Psoas muscle (tissue), 8 donors: ENCODE measurements at regions of chr1 and their contacts with region 1.

Region 1: DNA sequence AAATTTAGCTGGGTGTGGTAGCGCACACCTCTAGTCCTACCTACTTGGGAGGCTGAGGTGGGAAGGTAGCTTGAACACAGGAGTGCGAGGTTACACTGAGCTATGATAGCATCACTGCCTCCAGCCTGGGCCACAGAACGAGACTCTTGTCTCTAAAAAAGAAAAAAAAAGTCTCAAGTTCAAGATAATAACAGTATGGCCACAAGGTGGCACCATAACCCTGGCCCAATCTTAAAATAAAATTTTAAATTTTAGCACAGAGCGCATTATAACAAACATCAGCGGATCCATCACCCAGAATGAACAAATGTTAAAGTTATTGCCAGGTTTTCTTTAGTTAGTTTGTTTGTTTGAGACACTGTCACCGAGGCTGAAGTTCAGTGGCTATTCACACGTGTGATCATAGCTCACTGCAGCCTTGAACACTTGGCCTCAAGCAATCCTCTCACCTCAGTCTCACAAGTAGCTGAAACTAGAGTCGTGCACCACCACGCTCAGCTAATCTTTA is 2.9 kb upstream of the HTR6 start:
- DNase-seq: no peak
- ATAC-seq: peak in 1 of 4 donors; percentile 38
- H3K4me3 ChIP-seq: no peak overlapping the region
- H3K27ac ChIP-seq: no peak overlapping the region
- H3K4me1 ChIP-seq: no peaks in the 10 kb centered on the region
- H3K27me3 ChIP-seq: peaks cover 0 to 38% (median 13%) of the 10 kb centered on the region in 3 donors
- CTCF ChIP-seq: peak; percentile 78

Region 2: GRCh38 chr1:19341201-19342072 is 320.3 kb before region 1 on chr1:
- intact Hi-C with region 1: loop called in 1 of 2 experiments (anchors 2 kb)
- DNase-seq: peak; percentile 77 to 85
- ATAC-seq: peak; percentile 52 to 72 (median 62)
- H3K4me3 ChIP-seq: no peak overlapping the region
- H3K27ac ChIP-seq: no peak overlapping the region
- H3K4me1 ChIP-seq: no peaks in the 10 kb centered on the region
- H3K27me3 ChIP-seq: no peaks in the 10 kb centered on the region
- CTCF ChIP-seq: peak; percentile 82

Region 3: DNA sequence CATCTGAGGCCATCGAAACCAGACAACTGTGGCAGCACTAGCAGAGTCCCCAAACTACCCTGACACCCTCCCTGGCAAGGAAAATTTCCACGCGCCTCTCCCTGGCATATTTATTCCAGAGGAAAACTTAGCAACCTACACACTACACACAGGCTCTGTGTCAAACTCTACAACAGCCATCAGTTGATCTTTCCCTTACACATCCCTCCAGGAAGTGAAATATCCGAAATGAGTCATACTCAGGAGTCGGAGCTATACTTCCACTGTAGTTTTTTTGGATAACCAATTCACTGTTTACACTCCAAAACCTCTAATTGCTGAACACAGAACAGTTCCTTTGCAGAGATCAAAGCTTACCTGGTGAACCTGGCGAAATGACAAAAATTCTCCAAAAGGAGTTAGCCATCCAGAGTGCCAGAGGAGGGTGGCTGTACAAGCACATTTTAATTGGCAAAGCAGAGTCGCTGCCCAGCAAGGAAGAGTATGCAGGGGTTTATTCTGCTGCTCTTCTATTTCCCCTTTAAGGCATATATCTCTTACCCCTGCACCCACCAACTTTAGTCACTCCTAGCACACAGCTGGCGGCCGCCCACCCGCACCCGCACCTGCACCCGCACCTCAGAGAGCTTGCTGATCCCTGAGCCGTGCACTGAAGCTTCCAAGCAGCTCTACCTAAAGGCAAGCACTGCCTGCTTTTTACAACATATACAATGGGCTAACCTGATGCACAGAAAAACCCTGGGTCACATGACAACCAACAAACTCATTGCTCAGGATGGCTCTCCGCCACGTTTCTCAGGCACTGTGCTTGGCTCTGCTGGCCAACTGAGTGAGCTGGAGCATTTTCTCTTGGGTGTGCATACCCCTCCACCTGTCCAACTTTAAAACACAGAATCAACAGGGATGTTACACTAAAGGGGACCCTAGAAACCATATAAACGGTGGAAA is 231.4 kb before region 1 on chr1:
- intact Hi-C with region 1: no loop called
- DNase-seq: no peak
- ATAC-seq: peak in 2 of 4 donors; percentile 31 to 42
- H3K4me3 ChIP-seq: no peak overlapping the region
- H3K27ac ChIP-seq: peak overlapping the region; percentile 41
- H3K4me1 ChIP-seq: peaks cover 96% of the 10 kb centered on the region
- H3K27me3 ChIP-seq: no peaks in the 10 kb centered on the region
- CTCF ChIP-seq: no peak

Region 4: DNA sequence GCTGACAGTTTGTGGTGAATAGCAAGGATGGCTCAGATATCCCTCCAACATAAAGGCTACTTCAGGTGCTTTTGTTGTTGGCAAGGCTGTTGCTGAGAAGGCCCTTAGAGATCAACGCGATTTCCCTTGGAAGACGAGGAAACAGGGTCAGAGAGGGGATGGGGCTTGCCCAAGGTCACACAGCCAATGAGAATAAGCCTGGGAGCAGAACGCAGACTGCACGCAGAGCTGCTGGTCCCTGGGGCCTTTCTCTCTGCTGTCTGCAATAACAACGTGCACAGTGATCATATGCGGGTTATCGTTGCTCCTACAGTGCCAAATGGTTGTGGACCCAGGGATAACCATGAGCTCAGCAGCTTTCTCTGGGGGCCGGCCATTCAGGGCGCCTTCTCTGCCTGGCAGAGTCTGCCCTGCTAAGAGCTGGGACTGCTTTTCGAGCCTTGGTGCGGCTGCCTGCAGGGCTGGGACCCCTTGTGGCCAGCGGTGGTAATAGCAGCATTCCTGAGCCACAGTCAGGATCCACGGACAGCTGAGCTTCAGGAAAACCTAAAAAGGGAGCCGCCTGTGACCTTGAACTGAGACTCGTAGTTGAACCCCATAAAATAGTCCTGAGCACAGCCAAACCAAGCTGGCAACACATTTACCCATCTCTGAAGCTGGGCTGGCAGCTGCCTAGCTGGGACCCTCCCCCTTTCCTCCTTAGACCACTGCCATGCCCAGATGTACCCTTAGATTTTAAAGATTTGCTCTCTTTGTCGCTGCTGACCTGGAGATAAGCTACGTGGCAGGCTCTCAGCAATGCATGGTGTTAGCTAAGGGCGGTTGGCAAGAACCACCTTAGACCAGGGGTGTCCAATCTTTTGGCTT is 42.7 kb after region 1 on chr1:
- intact Hi-C with region 1: loop called (anchors 1 to 5 kb)
- DNase-seq: peak; percentile 67 to 85
- ATAC-seq: peak; percentile 92 to 94 (median 94)
- H3K4me3 ChIP-seq: no peak overlapping the region
- H3K27ac ChIP-seq: no peak overlapping the region
- H3K4me1 ChIP-seq: peaks cover 4% of the 10 kb centered on the region
- H3K27me3 ChIP-seq: no peaks in the 10 kb centered on the region
- CTCF ChIP-seq: peak; percentile 90